ENCODE measurements at regions of chr4 and their contacts with region 1.

Region 1: GRCh38 chr4:150209140-150209829 is 131.0 kb downstream of the DCLK2 start:
- DNase-seq: peak in 1 of 2 experiments; percentile 45
- H3K4me3 ChIP-seq: no peak overlapping the region
- H3K27ac ChIP-seq: no peak overlapping the region
- H3K4me1 ChIP-seq: peaks cover 23% of the 10 kb centered on the region
- H3K27me3 ChIP-seq: no peaks in the 10 kb centered on the region
- CTCF ChIP-seq: peak; percentile 57

Region 2: DNA sequence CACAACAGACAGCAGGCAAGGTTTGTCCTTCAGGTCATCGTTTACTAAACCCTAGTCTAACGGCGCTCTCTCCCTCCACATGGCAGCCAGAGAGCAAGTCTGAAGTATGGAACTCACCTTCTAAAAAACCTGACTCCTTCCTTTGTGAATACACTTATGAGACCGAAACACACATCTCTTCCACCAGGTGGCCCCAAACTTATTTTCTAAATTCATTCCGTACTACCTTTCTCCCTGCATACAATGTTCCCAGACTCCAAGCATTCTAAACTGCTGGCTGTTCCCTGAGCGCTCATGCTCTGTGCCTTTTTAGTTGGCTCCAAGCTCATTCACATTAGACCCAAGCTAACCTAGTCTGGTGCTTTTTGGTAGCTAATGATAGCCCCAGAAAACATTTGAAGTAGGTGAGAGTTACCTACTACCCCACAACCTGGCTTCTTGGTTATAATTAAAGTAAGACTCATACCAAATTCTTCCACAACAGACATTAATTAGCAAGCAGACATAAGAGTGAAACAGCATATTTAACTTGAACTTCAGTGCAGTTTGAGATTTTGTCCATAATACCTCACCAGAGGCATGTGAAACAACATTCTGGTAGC is 198.7 kb before region 1 on chr4:
- CTCF ChIA-PET with region 1: interaction called, 4 read pairs
- POLR2A ChIA-PET with region 1: no interaction called
- intact Hi-C with region 1: loop called (anchors 1 kb)
- DNase-seq: peak in 1 of 2 experiments; percentile 20
- H3K4me3 ChIP-seq: no peak overlapping the region
- H3K27ac ChIP-seq: no peak overlapping the region
- H3K4me1 ChIP-seq: no peaks in the 10 kb centered on the region
- H3K27me3 ChIP-seq: no peaks in the 10 kb centered on the region
- CTCF ChIP-seq: peak; percentile 60

Region 3: GRCh38 chr4:150119492-150119891 is 89.8 kb before region 1 on chr4:
- CTCF ChIA-PET with region 1: no interaction called
- POLR2A ChIA-PET with region 1: no interaction called
- intact Hi-C with region 1: loop called (anchors 2 kb)
- DNase-seq: peak in 1 of 2 experiments; percentile 71
- H3K4me3 ChIP-seq: no peak overlapping the region
- H3K27ac ChIP-seq: peak overlapping the region; percentile 46
- H3K4me1 ChIP-seq: peaks cover 18% of the 10 kb centered on the region
- H3K27me3 ChIP-seq: no peaks in the 10 kb centered on the region
- CTCF ChIP-seq: no peak

Region 4: GRCh38 chr4:150140774-150141400 is 68.4 kb before region 1 on chr4:
- CTCF ChIA-PET with region 1: no interaction called
- POLR2A ChIA-PET with region 1: no interaction called
- intact Hi-C with region 1: loop called (anchors 5 kb)
- DNase-seq: peak in 1 of 2 experiments; percentile 63
- H3K4me3 ChIP-seq: no peak overlapping the region
- H3K27ac ChIP-seq: peak overlapping the region; percentile 49
- H3K4me1 ChIP-seq: peaks cover 14% of the 10 kb centered on the region
- H3K27me3 ChIP-seq: no peaks in the 10 kb centered on the region
- CTCF ChIP-seq: no peak

Measured in PC-9 (cell line).